Ovary (tissue), 10 donors: ENCODE measurements at regions of chr10 and their contacts with region 1.

Region 1: DNA sequence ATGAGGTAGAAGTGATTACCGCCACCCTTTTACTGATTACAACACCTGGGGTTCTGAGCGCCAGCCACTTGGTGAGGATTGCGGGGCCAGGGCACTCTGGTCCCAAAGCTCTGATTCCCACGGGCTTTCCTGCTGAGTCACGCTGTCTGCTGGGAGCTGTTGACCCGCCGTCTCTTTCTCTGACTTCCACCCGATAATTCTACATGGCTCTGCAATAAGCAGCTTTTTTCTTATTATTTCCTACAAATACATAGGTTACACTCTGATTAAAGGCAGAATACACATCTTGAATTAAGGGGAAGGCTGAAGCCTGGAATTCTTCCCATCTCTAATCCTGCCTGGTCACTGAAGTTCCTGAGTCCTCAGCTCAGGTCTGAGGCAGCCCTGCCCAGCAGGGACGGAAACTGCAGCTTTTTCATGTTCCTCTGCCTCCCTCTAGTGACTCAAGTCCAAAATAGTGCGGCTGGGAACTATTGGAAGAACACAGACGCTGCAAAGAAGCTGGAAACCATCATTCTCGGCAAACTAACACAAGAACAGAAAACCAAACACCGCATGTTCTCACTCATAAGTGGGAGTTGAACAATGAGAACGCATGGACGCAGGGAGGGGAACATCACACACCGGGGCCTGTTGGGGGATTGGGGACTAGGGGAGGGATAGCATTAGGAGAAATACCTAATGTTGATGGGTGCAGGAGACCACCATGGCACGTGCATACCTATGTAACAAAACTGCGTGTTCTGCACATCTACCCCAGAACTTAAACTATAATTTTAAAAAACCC is 178.3 kb downstream of the PRKCQ start:
- DNase-seq: peak; percentile 68 to 79 (median 70)
- H3K4me3 ChIP-seq: peak overlapping the region; percentile 13
- H3K27ac ChIP-seq: no peak overlapping the region
- H3K4me1 ChIP-seq: peaks cover 2% of the 10 kb centered on the region
- H3K27me3 ChIP-seq: no peaks in the 10 kb centered on the region
- CTCF ChIP-seq: peak; percentile 29 to 79 (median 71)
- EP300 ChIP-seq: no peak
- POLR2A ChIP-seq: no peak

Region 2: GRCh38 chr10:5434017-5434753 is 967.6 kb before region 1 on chr10:
- intact Hi-C with region 1: no loop called
- DNase-seq: no peak
- H3K4me3 ChIP-seq: no peak overlapping the region
- H3K27ac ChIP-seq: no peak overlapping the region
- H3K4me1 ChIP-seq: no peaks in the 10 kb centered on the region
- H3K27me3 ChIP-seq: no peaks in the 10 kb centered on the region
- CTCF ChIP-seq: peak in 2 of 3 donors; percentile 24 to 28
- EP300 ChIP-seq: no peak
- POLR2A ChIP-seq: no peak

Region 3: DNA sequence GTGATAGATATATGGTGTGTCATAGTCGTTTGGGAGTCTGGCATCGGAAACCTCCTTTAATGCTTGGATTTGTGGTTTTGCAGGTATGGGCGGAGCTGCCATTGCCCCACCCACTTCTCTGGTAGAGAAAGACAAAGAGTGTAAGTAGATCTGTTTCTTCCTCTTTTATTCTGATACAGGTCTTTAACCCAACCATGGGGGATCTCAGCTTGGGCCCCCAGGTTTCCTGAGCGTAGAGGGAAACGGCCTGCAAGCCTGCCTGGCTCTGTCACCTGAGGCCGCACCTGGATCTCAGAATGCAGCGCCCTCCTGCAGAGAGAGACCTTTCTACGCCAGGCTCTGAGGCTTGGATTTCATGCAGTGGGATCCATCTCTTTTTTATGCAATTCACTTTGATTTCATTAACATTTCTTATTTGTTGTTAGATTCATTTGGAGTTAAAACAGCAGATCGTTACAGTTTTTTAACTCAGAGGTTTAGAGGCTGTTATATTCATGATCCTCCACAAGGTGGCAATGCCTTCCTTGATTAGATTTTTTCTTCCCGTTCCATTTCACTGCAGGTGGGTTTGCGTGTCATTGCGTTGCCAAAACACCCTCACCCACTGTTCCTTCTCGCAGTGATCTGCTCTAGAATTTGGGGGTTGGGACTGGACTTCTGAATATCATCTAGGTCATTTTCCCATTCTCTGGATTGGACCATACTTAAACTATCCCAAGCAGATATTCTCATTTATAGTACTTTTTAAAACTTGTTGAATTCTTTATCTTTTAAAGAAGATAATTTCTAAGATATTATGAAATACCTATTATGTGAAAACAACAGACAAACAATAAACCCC is 292.9 kb before region 1 on chr10:
- intact Hi-C with region 1: loop called in 3 of 4 experiments (anchors 2 to 5 kb)
- DNase-seq: no peak
- H3K4me3 ChIP-seq: no peak overlapping the region
- H3K27ac ChIP-seq: no peak overlapping the region
- H3K4me1 ChIP-seq: no peaks in the 10 kb centered on the region
- H3K27me3 ChIP-seq: no peaks in the 10 kb centered on the region
- CTCF ChIP-seq: peak; percentile 57 to 79 (median 78)
- EP300 ChIP-seq: no peak
- POLR2A ChIP-seq: no peak

Region 4: DNA sequence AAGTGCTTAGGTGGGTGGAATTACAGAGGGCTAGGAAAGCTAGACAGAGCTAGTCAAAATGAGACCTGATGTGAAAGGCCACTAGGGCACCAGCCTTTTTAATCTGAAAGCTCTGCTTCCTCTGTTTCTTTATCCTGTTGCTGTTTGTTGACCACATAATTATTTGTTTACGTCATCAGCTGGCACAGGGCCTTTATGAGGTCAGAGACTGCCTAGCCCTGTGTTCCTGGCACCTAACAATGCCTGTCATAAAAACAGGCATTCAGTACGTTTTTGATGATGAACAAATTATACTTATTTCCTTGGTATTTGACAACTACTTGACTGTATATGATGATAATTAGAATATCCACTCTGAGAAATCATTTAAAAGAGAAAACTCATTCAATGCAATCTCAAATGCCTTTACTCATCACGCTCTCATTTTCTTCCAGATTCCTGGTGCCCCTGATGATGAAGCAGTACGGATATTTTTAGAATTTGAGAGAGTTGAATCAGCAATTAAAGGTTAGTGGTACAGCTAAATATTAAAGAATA is 286.9 kb before region 1 on chr10:
- intact Hi-C with region 1: loop called in 2 of 4 experiments (anchors 5 kb)
- DNase-seq: no peak
- H3K4me3 ChIP-seq: no peak overlapping the region
- H3K27ac ChIP-seq: peak overlapping the region in 1 of 2 donors; percentile 16
- H3K4me1 ChIP-seq: no peaks in the 10 kb centered on the region
- H3K27me3 ChIP-seq: no peaks in the 10 kb centered on the region
- CTCF ChIP-seq: no peak
- EP300 ChIP-seq: no peak
- POLR2A ChIP-seq: no peak

Region 5: DNA sequence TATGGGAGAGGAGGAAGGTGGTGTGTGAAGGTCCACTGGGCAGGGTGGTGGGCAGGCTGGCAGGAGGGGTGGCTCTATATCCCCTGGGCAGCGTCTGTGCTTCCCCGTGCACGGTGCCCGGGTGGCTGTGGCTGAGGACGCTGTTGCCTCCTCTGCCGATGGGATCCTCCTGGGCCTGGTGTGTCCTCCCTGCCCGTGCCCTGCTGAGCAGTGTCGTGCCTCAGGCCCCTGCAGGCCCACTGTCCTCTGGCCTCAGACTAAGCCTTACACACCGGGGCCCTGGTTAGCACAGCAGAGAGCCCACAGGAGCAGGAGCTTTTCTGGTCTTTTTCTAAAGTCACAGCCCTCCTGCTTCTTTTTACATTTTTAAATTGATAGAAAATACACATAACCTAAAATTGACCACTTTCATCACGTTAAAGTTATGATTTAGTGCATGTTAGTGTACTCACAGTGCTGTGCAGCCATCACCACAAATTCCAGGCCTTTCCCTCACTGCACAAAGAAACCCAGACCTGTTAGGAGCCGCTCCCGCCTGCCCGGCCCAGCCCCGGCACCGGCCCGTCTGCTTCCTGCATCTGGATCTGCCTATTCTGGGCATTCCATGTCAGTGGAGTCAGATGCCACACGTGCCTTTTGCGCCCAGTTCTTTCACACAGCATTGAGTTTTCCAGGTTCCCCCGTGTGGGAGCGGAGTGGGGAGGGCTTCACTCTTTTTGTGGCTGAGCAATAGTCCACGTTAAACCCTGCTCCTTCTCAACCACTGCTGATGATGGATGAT is 179.6 kb before region 1 on chr10:
- intact Hi-C with region 1: loop called in 1 of 4 experiments (anchors 5 kb)
- DNase-seq: no peak
- H3K4me3 ChIP-seq: no peak overlapping the region
- H3K27ac ChIP-seq: no peak overlapping the region
- H3K4me1 ChIP-seq: no peaks in the 10 kb centered on the region
- H3K27me3 ChIP-seq: no peaks in the 10 kb centered on the region
- CTCF ChIP-seq: no peak
- EP300 ChIP-seq: no peak
- POLR2A ChIP-seq: no peak